Naive thymus-derived CD4-positive, alpha-beta T cell (primary cell): ENCODE measurements at regions of chr9 and their contacts with region 1.

Region 1: GRCh38 chr9:128947422-128948301 is at the starts of genes DOLK and NUP188:
- DNase-seq: peak; percentile 96 to 100 (median 98)
- ATAC-seq: peak; percentile 95
- H3K4me3 ChIP-seq: peak within 1 kb of the TSS; percentile 87
- H3K4me3 Mint-ChIP-seq: peak within 1 kb of the TSS; percentile 93 to 99 (median 98)
- H3K27ac ChIP-seq: peak within 1 kb of the TSS; percentile 97
- H3K27ac Mint-ChIP-seq: peak within 1 kb of the TSS; percentile 89 to 99 (median 97)
- H3K4me1 ChIP-seq: peaks cover 8 to 14% of the 10 kb centered on the region in 2 donors
- H3K4me1 Mint-ChIP-seq: peaks cover 16 to 49% (median 32%) of the 10 kb centered on the region in 7 donors
- H3K27me3 ChIP-seq: no peaks in the 10 kb centered on the region
- H3K27me3 Mint-ChIP-seq: no peaks in the 10 kb centered on the region
- total RNA-seq, gene DOLK: 6.0 to 12.8 (median 9.5) TPM
- total RNA-seq, gene NUP188: 55.7 to 98.7 (median 63.7) TPM

Region 2: DNA sequence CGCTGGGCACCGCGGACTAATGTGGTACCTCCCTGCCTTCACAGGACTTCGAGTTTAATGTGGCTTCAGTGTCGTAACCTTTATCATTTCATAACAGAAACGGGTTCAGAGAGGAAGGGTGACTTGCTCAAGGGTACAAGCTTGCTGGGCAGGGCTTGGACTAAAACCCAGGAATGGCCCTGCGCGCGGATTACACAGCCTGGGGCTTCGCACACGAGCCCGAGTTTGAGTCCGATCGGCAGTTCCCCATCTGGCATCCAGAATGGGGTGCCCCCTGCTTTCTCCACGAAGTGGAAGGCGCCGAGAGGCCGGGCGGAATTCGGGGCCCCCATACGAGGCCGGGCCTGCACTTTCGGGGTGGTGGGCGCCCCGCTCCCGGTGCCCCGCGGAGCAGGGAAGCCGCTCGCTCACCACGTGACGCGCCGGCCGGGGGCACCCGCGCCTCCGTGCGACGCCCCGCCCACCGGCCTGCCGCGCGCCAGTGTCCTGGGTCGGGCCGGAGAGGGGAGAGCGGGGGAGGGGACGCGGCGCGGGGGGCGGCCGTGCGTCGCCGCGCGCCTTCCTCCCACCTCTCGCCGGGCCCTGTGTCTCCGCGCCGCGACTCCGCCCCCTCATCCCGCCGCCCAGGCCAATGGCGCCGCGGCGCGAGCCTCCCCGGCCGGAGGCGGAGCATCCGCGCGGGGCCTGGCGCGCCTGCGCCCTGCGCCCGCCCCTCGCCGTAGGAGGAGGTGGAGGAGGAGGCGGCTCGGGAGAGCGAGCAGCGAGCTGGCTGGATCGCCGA is 259.0 kb before region 1 on chr9 and contains the start of gene SET:
- CTCF ChIA-PET with region 1: no interaction called
- POLR2A ChIA-PET with region 1: no interaction called
- intact Hi-C with region 1: loop called in 1 of 2 experiments (anchors 1 kb)
- DNase-seq: peak; percentile 86 to 97 (median 93)
- ATAC-seq: peak; percentile 89
- H3K4me3 ChIP-seq: peak within 1 kb of the TSS; percentile 84
- H3K4me3 Mint-ChIP-seq: peak within 1 kb of the TSS; percentile 86 to 99 (median 90)
- H3K27ac ChIP-seq: peak within 1 kb of the TSS; percentile 85
- H3K27ac Mint-ChIP-seq: peak within 1 kb of the TSS; percentile 87 to 99 (median 97)
- H3K4me1 ChIP-seq: peaks cover 22 to 48% of the 10 kb centered on the region in 2 donors
- H3K4me1 Mint-ChIP-seq: peaks cover 45 to 67% (median 59%) of the 10 kb centered on the region in 7 donors
- H3K27me3 ChIP-seq: no peaks in the 10 kb centered on the region
- H3K27me3 Mint-ChIP-seq: no peaks in the 10 kb centered on the region
- total RNA-seq, gene SET: 222 to 488 (median 270) TPM

Region 3: GRCh38 chr9:128818099-128818838 is 129.4 kb before region 1 on chr9 and contains the start of gene ENDOG:
- CTCF ChIA-PET with region 1: no interaction called
- POLR2A ChIA-PET with region 1: interaction called, 3 read pairs
- intact Hi-C with region 1: loop called in 1 of 2 experiments (anchors 2 kb)
- DNase-seq: peak; percentile 94 to 99 (median 97)
- ATAC-seq: peak; percentile 98
- H3K4me3 ChIP-seq: peak within 1 kb of the TSS; percentile 67
- H3K4me3 Mint-ChIP-seq: peak within 1 kb of the TSS; percentile 84 to 92 (median 91)
- H3K27ac ChIP-seq: peak within 1 kb of the TSS; percentile 72
- H3K27ac Mint-ChIP-seq: peak within 1 kb of the TSS; percentile 79 to 94 (median 87)
- H3K4me1 ChIP-seq: no peaks in the 10 kb centered on the region
- H3K4me1 Mint-ChIP-seq: peaks cover 7 to 29% (median 12%) of the 10 kb centered on the region in 7 donors
- H3K27me3 ChIP-seq: no peaks in the 10 kb centered on the region
- H3K27me3 Mint-ChIP-seq: no peaks in the 10 kb centered on the region
- total RNA-seq, gene ENDOG: 9.4 to 18.3 (median 14.7) TPM

Region 4: DNA sequence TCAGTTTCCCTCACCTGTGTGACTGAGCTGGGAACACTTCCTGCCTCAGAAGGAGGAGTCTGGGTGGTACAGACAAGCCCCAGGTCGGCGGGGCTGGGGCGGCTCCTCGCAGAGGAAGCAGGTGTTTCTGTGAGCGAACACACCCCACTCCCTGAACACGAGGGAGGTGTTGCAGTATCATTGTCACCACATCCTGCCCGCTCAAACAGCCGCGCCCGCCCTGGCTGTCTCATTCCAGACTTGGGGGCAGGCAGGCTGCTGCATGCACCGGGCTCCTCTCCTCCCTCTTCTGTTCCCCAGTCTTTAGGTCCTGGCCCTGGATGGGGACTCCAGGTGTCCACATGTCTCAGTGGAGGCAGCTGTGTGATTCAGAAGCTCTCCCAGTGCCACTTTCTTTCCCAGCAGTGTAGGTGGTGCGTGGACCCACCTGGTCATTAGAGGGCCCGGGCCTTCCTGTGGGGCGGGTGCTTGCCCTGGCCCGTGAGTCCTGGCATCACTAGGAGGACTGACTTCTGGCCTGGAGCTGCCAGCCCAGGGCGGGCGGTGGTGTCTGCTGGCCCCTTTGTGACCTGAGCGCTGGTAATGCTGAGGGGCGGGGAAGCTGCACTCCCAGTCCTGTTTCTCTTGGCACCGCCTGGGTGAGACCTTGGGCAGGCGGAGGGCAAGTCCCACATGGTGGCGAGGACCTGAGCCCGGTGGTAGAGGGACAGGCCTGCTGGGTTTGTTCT is 45.1 kb before region 1 on chr9:
- CTCF ChIA-PET with region 1: no interaction called
- POLR2A ChIA-PET with region 1: no interaction called
- intact Hi-C with region 1: loop called (anchors 1 to 2 kb)
- DNase-seq: peak; percentile 61 to 93 (median 90)
- ATAC-seq: peak; percentile 95
- H3K4me3 ChIP-seq: peak overlapping the region; percentile 55
- H3K4me3 Mint-ChIP-seq: peak overlapping the region; percentile 76 to 87 (median 84)
- H3K27ac ChIP-seq: peak overlapping the region; percentile 89
- H3K27ac Mint-ChIP-seq: peak overlapping the region; percentile 85 to 98 (median 96)
- H3K4me1 ChIP-seq: peaks cover 64 to 65% of the 10 kb centered on the region in 2 donors
- H3K4me1 Mint-ChIP-seq: peaks cover 32 to 84% (median 73%) of the 10 kb centered on the region in 7 donors
- H3K27me3 ChIP-seq: no peaks in the 10 kb centered on the region
- H3K27me3 Mint-ChIP-seq: no peaks in the 10 kb centered on the region

Region 5: GRCh38 chr9:128987805-128988204 is 40.1 kb after region 1 on chr9:
- CTCF ChIA-PET with region 1: no interaction called
- POLR2A ChIA-PET with region 1: no interaction called
- intact Hi-C with region 1: no loop called
- DNase-seq: no peak
- ATAC-seq: no peak
- H3K4me3 ChIP-seq: no peak overlapping the region
- H3K4me3 Mint-ChIP-seq: no peak overlapping the region
- H3K27ac ChIP-seq: no peak overlapping the region
- H3K27ac Mint-ChIP-seq: no peak overlapping the region
- H3K4me1 ChIP-seq: no peaks in the 10 kb centered on the region
- H3K4me1 Mint-ChIP-seq: peaks cover 0 to 3% (median 0%) of the 10 kb centered on the region in 7 donors
- H3K27me3 ChIP-seq: no peaks in the 10 kb centered on the region
- H3K27me3 Mint-ChIP-seq: no peaks in the 10 kb centered on the region

Region 6: DNA sequence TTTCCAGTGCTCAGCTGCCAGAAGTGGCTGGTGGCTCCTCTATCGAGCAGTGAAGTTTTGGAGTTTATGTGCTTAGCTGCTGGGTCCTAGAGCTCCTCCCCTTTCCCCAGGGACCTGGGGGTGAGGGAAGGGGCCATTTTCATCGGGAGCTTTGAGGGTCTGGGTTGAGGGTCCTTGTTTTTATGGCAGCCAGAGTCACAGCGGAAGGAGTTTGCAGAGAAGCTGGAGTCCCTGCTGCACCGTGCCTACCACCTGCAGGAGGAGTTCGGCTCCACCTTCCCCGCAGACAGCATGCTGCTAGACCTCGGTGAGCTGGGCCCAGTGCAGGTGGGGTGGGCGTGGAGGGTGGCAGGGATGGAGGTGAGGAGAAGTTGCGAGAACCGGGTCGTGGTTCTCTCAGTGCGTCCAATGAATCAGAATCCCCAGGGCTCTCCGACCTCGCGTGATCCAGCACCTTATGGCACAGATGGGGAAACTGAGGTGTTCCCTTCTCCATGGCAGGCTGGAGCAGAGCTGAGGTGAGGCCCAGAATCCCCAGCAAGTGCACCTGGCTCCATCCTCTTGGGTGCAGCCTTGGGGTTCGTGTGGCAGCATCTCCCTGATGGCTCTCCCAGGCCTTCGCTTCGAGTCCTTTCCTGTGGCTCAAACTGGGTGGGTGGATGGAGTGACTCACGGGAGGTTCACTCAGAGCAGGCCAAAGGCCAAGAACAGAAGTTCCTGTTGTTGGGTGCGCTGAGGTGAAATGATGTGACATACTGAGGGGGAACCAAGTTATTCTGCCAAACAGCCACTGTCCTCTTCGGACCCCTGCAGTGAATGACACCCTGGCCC is 111.5 kb after region 1 on chr9:
- CTCF ChIA-PET with region 1: no interaction called
- POLR2A ChIA-PET with region 1: no interaction called
- intact Hi-C with region 1: no loop called
- DNase-seq: no peak
- ATAC-seq: no peak
- H3K4me3 ChIP-seq: no peak overlapping the region
- H3K4me3 Mint-ChIP-seq: no peak overlapping the region
- H3K27ac ChIP-seq: no peak overlapping the region
- H3K27ac Mint-ChIP-seq: peak overlapping the region in 1 of 9 donors; percentile 25
- H3K4me1 ChIP-seq: no peaks in the 10 kb centered on the region
- H3K4me1 Mint-ChIP-seq: no peaks in the 10 kb centered on the region
- H3K27me3 ChIP-seq: no peaks in the 10 kb centered on the region
- H3K27me3 Mint-ChIP-seq: no peaks in the 10 kb centered on the region

Region 7: DNA sequence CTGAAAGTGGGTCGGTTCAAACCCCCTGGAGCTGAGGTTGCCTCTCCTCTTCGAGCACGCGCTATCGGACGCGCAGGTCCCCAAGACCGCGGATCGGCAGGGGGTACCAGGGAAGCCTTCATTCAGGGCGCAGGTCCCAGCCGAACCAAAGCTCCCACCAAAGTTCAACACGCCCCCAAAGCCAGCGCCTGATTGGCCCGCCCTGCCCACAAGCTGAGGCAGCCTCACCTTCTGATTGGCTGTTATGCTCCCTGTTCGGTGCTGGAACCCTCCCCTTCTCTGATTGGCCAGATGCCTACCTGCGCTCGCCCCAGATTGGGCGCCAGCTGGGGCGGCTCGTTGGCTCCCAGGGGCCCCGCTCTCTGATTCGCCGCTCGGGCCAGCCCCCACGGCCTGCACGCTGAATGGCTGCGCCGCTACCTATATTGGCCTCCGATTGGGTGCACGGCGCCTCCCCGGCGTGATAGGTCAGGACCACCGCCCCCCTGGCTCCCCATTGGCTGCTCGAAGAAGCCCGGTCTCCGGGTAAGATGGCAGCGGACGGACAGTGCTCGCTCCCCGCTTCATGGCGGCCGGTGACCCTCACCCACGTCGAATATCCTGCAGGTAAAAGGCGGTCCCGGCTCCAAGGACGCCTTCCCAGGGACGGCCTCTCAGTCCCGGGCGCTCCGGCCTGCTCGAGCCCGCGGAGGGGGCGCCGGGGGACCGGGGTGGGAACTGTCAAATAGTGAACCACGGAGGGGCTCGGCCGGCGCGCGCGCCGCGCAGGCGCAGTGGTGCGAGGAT is 133.1 kb after region 1 on chr9 and contains the start of gene DOLPP1:
- CTCF ChIA-PET with region 1: no interaction called
- POLR2A ChIA-PET with region 1: no interaction called
- intact Hi-C with region 1: loop called in 1 of 2 experiments (anchors 2 kb)
- DNase-seq: peak; percentile 96 to 99 (median 99)
- ATAC-seq: peak; percentile 97
- H3K4me3 ChIP-seq: peak within 1 kb of the TSS; percentile 82
- H3K4me3 Mint-ChIP-seq: peak within 1 kb of the TSS; percentile 88 to 94 (median 90)
- H3K27ac ChIP-seq: peak within 1 kb of the TSS; percentile 79
- H3K27ac Mint-ChIP-seq: peak within 1 kb of the TSS; percentile 69 to 93 (median 87)
- H3K4me1 ChIP-seq: peaks cover 19 to 20% of the 10 kb centered on the region in 2 donors
- H3K4me1 Mint-ChIP-seq: peaks cover 6 to 41% (median 26%) of the 10 kb centered on the region in 7 donors
- H3K27me3 ChIP-seq: no peaks in the 10 kb centered on the region
- H3K27me3 Mint-ChIP-seq: no peaks in the 10 kb centered on the region
- total RNA-seq, gene DOLPP1: 5.7 to 17.1 (median 11.9) TPM

Region 8: GRCh38 chr9:129656795-129657390 is 709.2 kb after region 1 on chr9:
- CTCF ChIA-PET with region 1: no interaction called
- POLR2A ChIA-PET with region 1: no interaction called
- intact Hi-C with region 1: no loop called
- DNase-seq: no peak
- ATAC-seq: no peak
- H3K4me3 ChIP-seq: no peak overlapping the region
- H3K4me3 Mint-ChIP-seq: no peak overlapping the region
- H3K27ac ChIP-seq: no peak overlapping the region
- H3K27ac Mint-ChIP-seq: no peak overlapping the region
- H3K4me1 ChIP-seq: no peaks in the 10 kb centered on the region
- H3K4me1 Mint-ChIP-seq: peaks cover 0 to 2% (median 0%) of the 10 kb centered on the region in 7 donors
- H3K27me3 ChIP-seq: no peaks in the 10 kb centered on the region
- H3K27me3 Mint-ChIP-seq: peaks cover 0 to 5% (median 0%) of the 10 kb centered on the region in 5 donors